IMR-90 (cell line): ENCODE measurements at regions of chr9 and their contacts with region 1.

Region 1: GRCh38 chr9:107137495-107138202 is 145.4 kb upstream of the RAD23B start:
- DNase-seq: peak; percentile 33
- ATAC-seq: peak; percentile 79
- H3K4me3 ChIP-seq: no peak overlapping the region
- H3K27ac ChIP-seq: no peak overlapping the region
- H3K4me1 ChIP-seq: no peaks in the 10 kb centered on the region
- H3K27me3 ChIP-seq: peaks cover 25% of the 10 kb centered on the region
- CTCF ChIP-seq: peak; percentile 67
- POLR2A ChIP-seq: no peak
- RAD21 ChIP-seq: peak; percentile 65

Region 2: GRCh38 chr9:107307331-107307730 is 169.7 kb after region 1 on chr9:
- CTCF ChIA-PET with region 1: interaction called, 10 read pairs
- POLR2A ChIA-PET with region 1: no interaction called
- dilution Hi-C with region 1: no loop called
- in situ Hi-C with region 1: no loop called
- intact Hi-C with region 1: no loop called
- DNase-seq: peak; percentile 31
- ATAC-seq: peak; percentile 48; the same call in 1 of the 2 replicates
- H3K4me3 ChIP-seq: no peak overlapping the region
- H3K27ac ChIP-seq: no peak overlapping the region
- H3K4me1 ChIP-seq: peaks cover 2% of the 10 kb centered on the region
- H3K27me3 ChIP-seq: no peaks in the 10 kb centered on the region
- CTCF ChIP-seq: no peak
- POLR2A ChIP-seq: no peak
- RAD21 ChIP-seq: no peak